CD4-positive, alpha-beta memory T cell (primary cell): ENCODE measurements at regions of chr18 and their contacts with region 1.

Region 1: GRCh38 chr18:63199743-63200241 is 119.8 kb downstream of the BCL2 start:
- DNase-seq: peak; percentile 66 to 76 (median 71)
- H3K4me3 ChIP-seq: peak overlapping the region; percentile 64 to 65
- H3K4me3 Mint-ChIP-seq: no peak overlapping the region
- H3K27ac ChIP-seq: peak overlapping the region; percentile 59
- H3K27ac Mint-ChIP-seq: no peak overlapping the region
- H3K4me1 ChIP-seq: peaks cover 85% of the 10 kb centered on the region
- H3K4me1 Mint-ChIP-seq: peaks cover 28 to 37% (median 31%) of the 10 kb centered on the region in 4 donors
- H3K27me3 ChIP-seq: no peaks in the 10 kb centered on the region
- H3K27me3 Mint-ChIP-seq: no peaks in the 10 kb centered on the region

Region 2: DNA sequence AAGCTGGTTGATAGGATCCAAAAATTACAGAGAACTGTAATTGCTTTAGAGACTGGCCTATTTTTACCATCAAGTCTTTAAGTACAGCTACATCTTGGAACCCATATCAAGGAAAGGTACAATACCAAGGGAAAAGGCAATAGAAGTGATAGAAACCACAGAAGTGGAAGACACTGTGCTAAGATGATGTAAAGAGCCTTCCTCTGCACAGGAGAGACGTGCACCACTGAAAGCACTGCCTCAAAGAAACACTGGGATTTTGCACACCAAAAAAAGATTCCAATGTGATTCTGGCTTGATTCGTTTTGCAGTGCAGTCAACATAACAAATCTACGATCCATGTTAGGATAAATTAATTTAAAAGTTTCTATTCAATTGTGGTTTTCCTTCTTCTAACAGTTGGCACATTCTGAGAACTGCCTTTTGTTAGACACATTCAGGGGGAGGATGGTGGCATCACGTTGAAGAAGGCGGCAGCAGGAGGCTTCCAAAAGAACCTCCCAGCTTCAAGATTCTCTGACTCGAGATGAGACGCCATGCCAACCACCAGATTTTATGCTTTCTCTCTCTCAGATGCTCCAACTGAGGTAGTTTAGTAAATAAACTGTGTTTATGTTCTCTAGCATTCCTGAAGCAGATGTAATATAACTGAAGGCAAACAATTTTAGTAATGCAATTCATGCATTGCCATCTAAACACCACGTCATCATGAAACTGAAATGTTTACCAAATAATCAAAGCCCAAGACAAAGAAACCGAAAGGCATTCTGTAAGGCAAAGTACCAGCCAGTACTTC is 16.9 kb after region 1 on chr18:
- CTCF ChIA-PET with region 1: interaction called, 5 read pairs
- POLR2A ChIA-PET with region 1: interaction called, 13 read pairs
- intact Hi-C with region 1: loop called (anchors 1 kb)
- DNase-seq: peak; percentile 38 to 60 (median 50)
- H3K4me3 ChIP-seq: peak overlapping the region in 1 of 2 donors; percentile 21
- H3K4me3 Mint-ChIP-seq: peak overlapping the region; percentile 67 to 84 (median 78)
- H3K27ac ChIP-seq: peak overlapping the region; percentile 55
- H3K27ac Mint-ChIP-seq: peak overlapping the region; percentile 87 to 97 (median 91)
- H3K4me1 ChIP-seq: peaks cover 88% of the 10 kb centered on the region
- H3K4me1 Mint-ChIP-seq: peaks cover 71 to 100% (median 89%) of the 10 kb centered on the region in 4 donors
- H3K27me3 ChIP-seq: no peaks in the 10 kb centered on the region
- H3K27me3 Mint-ChIP-seq: no peaks in the 10 kb centered on the region